Calu3 (cell line): ENCODE measurements at regions of chr3 and their contacts with region 1.

Region 1: GRCh38 chr3:156554842-156555687 is at the start of gene SSR3:
- DNase-seq: peak; percentile 100
- H3K4me3 Mint-ChIP-seq: peak within 1 kb of the TSS; percentile 87
- H3K27ac Mint-ChIP-seq: peak within 1 kb of the TSS; percentile 90
- H3K4me1 Mint-ChIP-seq: peaks cover 43% of the 10 kb centered on the region
- H3K27me3 Mint-ChIP-seq: no peaks in the 10 kb centered on the region
- CTCF ChIP-seq: peak; percentile 68
- total RNA-seq, gene SSR3: 287 and 312 TPM in 2 replicates

Region 2: GRCh38 chr3:155972885-155973584 is 582.0 kb before region 1 on chr3:
- CTCF ChIA-PET with region 1: no interaction called
- intact Hi-C with region 1: no loop called
- DNase-seq: no peak
- H3K4me3 Mint-ChIP-seq: no peak overlapping the region
- H3K27ac Mint-ChIP-seq: no peak overlapping the region
- H3K4me1 Mint-ChIP-seq: no peaks in the 10 kb centered on the region
- H3K27me3 Mint-ChIP-seq: no peaks in the 10 kb centered on the region
- CTCF ChIP-seq: no peak

Region 3: GRCh38 chr3:156522673-156523072 is 32.4 kb before region 1 on chr3:
- CTCF ChIA-PET with region 1: no interaction called
- intact Hi-C with region 1: no loop called
- DNase-seq: no peak
- H3K4me3 Mint-ChIP-seq: no peak overlapping the region
- H3K27ac Mint-ChIP-seq: no peak overlapping the region
- H3K4me1 Mint-ChIP-seq: no peaks in the 10 kb centered on the region
- H3K27me3 Mint-ChIP-seq: no peaks in the 10 kb centered on the region
- CTCF ChIP-seq: no peak

Region 4: GRCh38 chr3:156535162-156535627 is 19.9 kb before region 1 on chr3:
- CTCF ChIA-PET with region 1: interaction called, 14 read pairs
- intact Hi-C with region 1: no loop called
- DNase-seq: peak; percentile 76
- H3K4me3 Mint-ChIP-seq: peak overlapping the region; percentile 3
- H3K27ac Mint-ChIP-seq: peak overlapping the region; percentile 35
- H3K4me1 Mint-ChIP-seq: peaks cover 22% of the 10 kb centered on the region
- H3K27me3 Mint-ChIP-seq: no peaks in the 10 kb centered on the region
- CTCF ChIP-seq: no peak

Region 5: GRCh38 chr3:156630081-156630772 is 75.2 kb after region 1 on chr3:
- CTCF ChIA-PET with region 1: interaction called, 6 read pairs
- intact Hi-C with region 1: loop called (anchors 1 kb)
- DNase-seq: peak; percentile 45
- H3K4me3 Mint-ChIP-seq: no peak overlapping the region
- H3K27ac Mint-ChIP-seq: no peak overlapping the region
- H3K4me1 Mint-ChIP-seq: peaks cover 57% of the 10 kb centered on the region
- H3K27me3 Mint-ChIP-seq: no peaks in the 10 kb centered on the region
- CTCF ChIP-seq: no peak

Region 6: DNA sequence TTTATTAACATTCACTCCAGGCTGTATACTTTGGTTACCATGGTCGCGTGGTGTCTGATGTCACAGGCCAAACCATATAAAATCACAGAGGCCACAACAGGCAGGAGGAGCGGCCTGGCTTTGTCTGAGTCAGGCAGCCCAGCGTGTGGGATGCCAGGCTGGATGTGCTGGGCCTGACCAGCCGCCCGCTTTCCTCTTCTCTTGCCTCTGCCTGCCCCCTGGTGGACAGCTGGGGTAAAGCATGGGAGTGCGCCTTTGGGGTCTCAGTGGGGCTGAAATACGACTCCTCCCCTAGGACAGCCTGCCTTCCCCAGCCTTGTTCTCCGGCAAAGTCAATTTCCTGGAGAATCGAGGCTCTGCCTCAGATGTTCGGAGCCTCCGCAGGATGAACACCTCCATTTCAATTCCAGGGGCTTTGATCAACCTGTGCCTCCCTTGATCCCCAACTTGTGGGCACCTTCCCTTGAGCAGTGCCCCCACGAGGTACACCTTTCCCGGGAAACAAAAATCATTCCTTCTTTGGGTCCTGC is 526.7 kb after region 1 on chr3:
- CTCF ChIA-PET with region 1: interaction called, 8 read pairs
- intact Hi-C with region 1: loop called (anchors 5 kb)
- DNase-seq: peak; percentile 99
- H3K4me3 Mint-ChIP-seq: no peak overlapping the region
- H3K27ac Mint-ChIP-seq: peak overlapping the region; percentile 94
- H3K4me1 Mint-ChIP-seq: peaks cover 46% of the 10 kb centered on the region
- H3K27me3 Mint-ChIP-seq: no peaks in the 10 kb centered on the region
- CTCF ChIP-seq: peak; percentile 100